ENCODE measurements at regions of chr11 and their contacts with region 1.

Region 1: GRCh38 chr11:6682936-6683861 is at the start of gene MRPL17:
- DNase-seq: peak; percentile 95 to 100 (median 99)
- ATAC-seq: peak; percentile 99
- H3K4me3 ChIP-seq: peak within 1 kb of the TSS; percentile 75
- H3K4me3 Mint-ChIP-seq: peak within 1 kb of the TSS; percentile 83 to 99 (median 98)
- H3K27ac ChIP-seq: peak within 1 kb of the TSS; percentile 85
- H3K27ac Mint-ChIP-seq: peak within 1 kb of the TSS; percentile 94 to 99 (median 99)
- H3K4me1 ChIP-seq: peaks cover 7 to 10% of the 10 kb centered on the region in 2 donors
- H3K4me1 Mint-ChIP-seq: peaks cover 18 to 58% (median 44%) of the 10 kb centered on the region in 7 donors
- H3K27me3 ChIP-seq: no peaks in the 10 kb centered on the region
- H3K27me3 Mint-ChIP-seq: peaks cover 0 to 3% (median 0%) of the 10 kb centered on the region in 5 donors
- total RNA-seq, gene MRPL17: 10.0 to 70.3 (median 26.4) TPM

Region 2: GRCh38 chr11:6443269-6444003 is 239.8 kb before region 1 on chr11:
- CTCF ChIA-PET with region 1: no interaction called
- POLR2A ChIA-PET with region 1: no interaction called
- intact Hi-C with region 1: loop called in 1 of 2 experiments (anchors 1 kb)
- DNase-seq: peak; percentile 28 to 67 (median 53)
- ATAC-seq: peak; percentile 87
- H3K4me3 ChIP-seq: no peak overlapping the region
- H3K4me3 Mint-ChIP-seq: no peak overlapping the region
- H3K27ac ChIP-seq: no peak overlapping the region
- H3K27ac Mint-ChIP-seq: no peak overlapping the region
- H3K4me1 ChIP-seq: peaks cover 12 to 19% of the 10 kb centered on the region in 2 donors
- H3K4me1 Mint-ChIP-seq: peaks cover 0 to 5% (median 0%) of the 10 kb centered on the region in 7 donors
- H3K27me3 ChIP-seq: no peaks in the 10 kb centered on the region
- H3K27me3 Mint-ChIP-seq: peaks cover 0 to 12% (median 0%) of the 10 kb centered on the region in 5 donors

Region 3: GRCh38 chr11:6594142-6594768 is 88.9 kb before region 1 on chr11:
- CTCF ChIA-PET with region 1: interaction called, 12 read pairs
- POLR2A ChIA-PET with region 1: interaction called, 8 read pairs
- intact Hi-C with region 1: no loop called
- DNase-seq: no peak
- ATAC-seq: no peak
- H3K4me3 ChIP-seq: no peak overlapping the region
- H3K4me3 Mint-ChIP-seq: peak overlapping the region in 1 of 10 donors; percentile 11
- H3K27ac ChIP-seq: no peak overlapping the region
- H3K27ac Mint-ChIP-seq: peak overlapping the region in 5 of 9 donors; percentile 10 to 84 (median 26)
- H3K4me1 ChIP-seq: no peaks in the 10 kb centered on the region
- H3K4me1 Mint-ChIP-seq: peaks cover 21 to 51% (median 42%) of the 10 kb centered on the region in 7 donors
- H3K27me3 ChIP-seq: no peaks in the 10 kb centered on the region
- H3K27me3 Mint-ChIP-seq: no peaks in the 10 kb centered on the region

Region 4: DNA sequence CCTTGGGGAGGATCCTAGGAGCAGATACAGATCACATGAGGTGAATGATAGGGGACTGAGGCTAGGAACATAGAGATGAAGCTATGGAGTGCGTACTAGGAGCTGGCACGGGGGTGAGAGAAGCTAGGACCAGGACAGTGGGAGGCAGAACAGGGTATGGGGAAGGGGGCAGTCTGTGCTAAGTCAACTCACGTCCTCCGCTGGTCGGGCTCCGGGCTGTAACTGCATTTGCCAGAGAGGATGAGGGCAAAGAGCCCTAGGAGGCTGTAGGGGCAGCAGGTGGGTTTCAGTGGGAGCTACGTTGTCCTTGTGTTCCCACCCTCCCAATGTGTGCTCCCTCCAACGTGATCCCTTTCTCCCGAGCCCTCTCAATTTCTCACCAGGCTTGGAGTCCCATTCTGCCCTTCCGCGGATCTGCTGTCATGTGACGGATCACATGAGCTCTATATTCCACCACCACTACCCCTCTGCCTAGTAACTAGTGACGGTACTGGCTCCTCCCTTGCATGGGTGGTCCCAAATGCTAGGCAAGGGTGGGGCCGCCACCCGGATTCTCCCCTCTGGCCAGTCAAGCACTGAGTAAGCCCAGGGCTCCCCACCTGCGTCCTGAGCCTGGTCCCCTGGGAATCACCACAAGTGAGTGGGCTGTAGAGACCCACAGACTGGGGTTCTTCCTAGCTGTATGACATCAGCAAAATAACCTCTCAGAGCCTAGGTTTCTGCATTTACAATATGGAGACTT is 64.0 kb before region 1 on chr11 and contains the start of gene TPP1:
- CTCF ChIA-PET with region 1: interaction called, 23 read pairs
- POLR2A ChIA-PET with region 1: interaction called, 60 read pairs
- intact Hi-C with region 1: loop called (anchors 1 kb)
- DNase-seq: peak; percentile 76 to 94 (median 90)
- ATAC-seq: peak; percentile 96
- H3K4me3 ChIP-seq: peak within 1 kb of the TSS; percentile 91
- H3K4me3 Mint-ChIP-seq: no peak within 1 kb of the TSS
- H3K27ac ChIP-seq: peak within 1 kb of the TSS; percentile 87
- H3K27ac Mint-ChIP-seq: no peak within 1 kb of the TSS
- H3K4me1 ChIP-seq: peaks cover 6 to 22% of the 10 kb centered on the region in 2 donors
- H3K4me1 Mint-ChIP-seq: peaks cover 7 to 17% (median 9%) of the 10 kb centered on the region in 7 donors
- H3K27me3 ChIP-seq: no peaks in the 10 kb centered on the region
- H3K27me3 Mint-ChIP-seq: no peaks in the 10 kb centered on the region
- total RNA-seq, gene TPP1: 49.9 to 160 (median 134) TPM

Region 5: GRCh38 chr11:6667733-6668374 is 15.3 kb before region 1 on chr11:
- CTCF ChIA-PET with region 1: interaction called, 6 read pairs
- POLR2A ChIA-PET with region 1: interaction called, 68 read pairs
- intact Hi-C with region 1: loop called (anchors 1 to 2 kb)
- DNase-seq: peak in 8 of 9 donors; percentile 23 to 53 (median 46)
- ATAC-seq: peak; percentile 87
- H3K4me3 ChIP-seq: no peak overlapping the region
- H3K4me3 Mint-ChIP-seq: peak overlapping the region in 3 of 10 donors; percentile 18 to 65 (median 39)
- H3K27ac ChIP-seq: peak overlapping the region; percentile 29
- H3K27ac Mint-ChIP-seq: peak overlapping the region; percentile 38 to 91 (median 64)
- H3K4me1 ChIP-seq: peaks cover 10 to 43% of the 10 kb centered on the region in 2 donors
- H3K4me1 Mint-ChIP-seq: peaks cover 35 to 85% (median 70%) of the 10 kb centered on the region in 7 donors
- H3K27me3 ChIP-seq: no peaks in the 10 kb centered on the region
- H3K27me3 Mint-ChIP-seq: peaks cover 0 to 13% (median 0%) of the 10 kb centered on the region in 5 donors

Region 6: GRCh38 chr11:6757373-6757967 is 74.3 kb after region 1 on chr11:
- CTCF ChIA-PET with region 1: interaction called, 3 read pairs
- POLR2A ChIA-PET with region 1: no interaction called
- intact Hi-C with region 1: loop called in 1 of 2 experiments (anchors 1 kb)
- DNase-seq: peak in 8 of 9 donors; percentile 30 to 67 (median 56)
- ATAC-seq: peak; percentile 84
- H3K4me3 ChIP-seq: no peak overlapping the region
- H3K4me3 Mint-ChIP-seq: no peak overlapping the region
- H3K27ac ChIP-seq: no peak overlapping the region
- H3K27ac Mint-ChIP-seq: peak overlapping the region in 3 of 9 donors; percentile 22 to 34 (median 28)
- H3K4me1 ChIP-seq: no peaks in the 10 kb centered on the region
- H3K4me1 Mint-ChIP-seq: peaks cover 0 to 31% (median 10%) of the 10 kb centered on the region in 7 donors
- H3K27me3 ChIP-seq: peaks cover 0 to 7% of the 10 kb centered on the region in 2 donors
- H3K27me3 Mint-ChIP-seq: peaks cover 3 to 25% (median 5%) of the 10 kb centered on the region in 5 donors